AG04449 (cell line): ENCODE measurements at regions of chr2 and their contacts with region 1.

Region 1: DNA sequence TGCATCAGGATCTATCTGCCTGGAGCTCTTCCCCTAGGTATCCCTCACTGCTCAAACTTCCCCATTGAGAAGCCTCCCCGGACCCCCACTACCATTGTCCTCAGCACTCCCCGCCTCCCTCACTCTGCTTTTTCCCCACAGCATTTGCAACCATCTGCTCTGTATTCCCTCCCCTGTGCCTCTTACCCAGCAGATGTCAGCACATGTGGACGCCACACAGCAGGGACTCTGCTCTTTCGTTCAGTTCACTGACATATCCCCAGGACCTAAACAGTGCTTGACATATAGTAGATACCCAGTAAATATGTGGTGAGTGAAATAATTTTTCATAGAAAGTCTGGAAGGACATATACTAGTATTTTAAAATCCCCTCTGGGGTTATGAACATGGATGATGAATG is 101.1 kb downstream of the TMEM247 start:
- DNase-seq: no peak
- H3K4me3 ChIP-seq: no peak overlapping the region
- CTCF ChIP-seq: no peak

Region 2: GRCh38 chr2:46601328-46601963 is 21.0 kb after region 1 on chr2:
- CTCF ChIA-PET with region 1: interaction called, 12 read pairs
- POLR2A ChIA-PET with region 1: no interaction called
- DNase-seq: no peak
- H3K4me3 ChIP-seq: no peak overlapping the region
- CTCF ChIP-seq: no peak